ENCODE measurements at regions of chr19 and their contacts with region 1.

Region 1: DNA sequence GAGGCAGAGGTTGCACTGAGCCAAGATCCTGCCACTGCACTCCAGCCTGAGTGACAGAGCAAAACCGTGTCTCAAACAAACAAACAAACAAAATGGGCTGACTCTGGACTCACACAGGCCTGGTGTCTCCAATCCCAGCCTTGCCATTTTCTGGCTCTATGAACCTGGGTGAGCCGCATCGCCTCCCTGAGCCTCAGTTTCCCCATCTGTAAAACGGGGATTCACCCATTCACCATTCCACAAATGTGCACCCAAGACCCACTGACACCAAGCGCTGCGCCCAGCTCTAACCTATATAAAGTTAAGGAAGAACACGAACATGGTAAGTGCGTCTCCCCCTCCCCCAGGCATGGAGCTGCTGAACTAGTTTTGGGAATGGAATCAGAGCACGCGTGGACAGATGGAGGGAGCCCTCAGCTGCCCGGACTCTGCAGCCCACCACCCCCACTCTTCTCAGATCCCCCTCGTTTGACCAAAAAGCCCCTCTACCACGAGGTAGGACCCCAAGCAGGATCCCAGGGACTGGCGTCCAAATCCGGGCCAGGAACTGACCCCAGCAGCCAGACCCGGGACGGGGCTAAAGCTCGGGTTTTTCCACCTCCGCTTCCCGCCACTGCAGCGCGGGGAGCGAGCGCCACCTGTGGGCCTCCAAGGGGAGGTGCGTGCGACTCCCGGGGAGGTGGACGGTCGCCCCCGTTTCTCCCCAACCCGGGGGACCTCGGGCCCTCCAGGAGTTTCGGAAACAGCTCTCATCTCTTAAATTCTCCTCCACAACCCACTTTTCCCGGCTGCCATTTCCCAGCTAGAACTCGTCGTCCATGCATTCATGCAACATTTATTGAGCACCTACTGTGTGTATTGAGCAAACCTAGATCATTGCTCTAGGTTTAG is 33.0 kb upstream of the ADGRE5 start:
- DNase-seq: no peak
- H3K4me3 ChIP-seq: peak overlapping the region; percentile 32
- H3K27me3 ChIP-seq: peaks cover 8% of the 10 kb centered on the region
- CTCF ChIP-seq: peak; percentile 100

Region 2: GRCh38 chr19:14136509-14137281 is 211.5 kb before region 1 on chr19 and contains the start of gene ASF1B:
- CTCF ChIA-PET with region 1: interaction called, 52 read pairs
- POLR2A ChIA-PET with region 1: no interaction called
- DNase-seq: peak; percentile 99
- H3K4me3 ChIP-seq: peak within 1 kb of the TSS; percentile 93
- H3K27me3 ChIP-seq: no peaks in the 10 kb centered on the region
- CTCF ChIP-seq: peak; percentile 66
- polyA plus RNA-seq, gene ASF1B: 8.2 and 11.1 TPM in 2 replicates

Region 3: GRCh38 chr19:14183741-14184350 is 164.4 kb before region 1 on chr19:
- CTCF ChIA-PET with region 1: interaction called, 11 read pairs
- POLR2A ChIA-PET with region 1: no interaction called
- DNase-seq: no peak
- H3K4me3 ChIP-seq: no peak overlapping the region
- H3K27me3 ChIP-seq: no peaks in the 10 kb centered on the region
- CTCF ChIP-seq: no peak

Region 4: DNA sequence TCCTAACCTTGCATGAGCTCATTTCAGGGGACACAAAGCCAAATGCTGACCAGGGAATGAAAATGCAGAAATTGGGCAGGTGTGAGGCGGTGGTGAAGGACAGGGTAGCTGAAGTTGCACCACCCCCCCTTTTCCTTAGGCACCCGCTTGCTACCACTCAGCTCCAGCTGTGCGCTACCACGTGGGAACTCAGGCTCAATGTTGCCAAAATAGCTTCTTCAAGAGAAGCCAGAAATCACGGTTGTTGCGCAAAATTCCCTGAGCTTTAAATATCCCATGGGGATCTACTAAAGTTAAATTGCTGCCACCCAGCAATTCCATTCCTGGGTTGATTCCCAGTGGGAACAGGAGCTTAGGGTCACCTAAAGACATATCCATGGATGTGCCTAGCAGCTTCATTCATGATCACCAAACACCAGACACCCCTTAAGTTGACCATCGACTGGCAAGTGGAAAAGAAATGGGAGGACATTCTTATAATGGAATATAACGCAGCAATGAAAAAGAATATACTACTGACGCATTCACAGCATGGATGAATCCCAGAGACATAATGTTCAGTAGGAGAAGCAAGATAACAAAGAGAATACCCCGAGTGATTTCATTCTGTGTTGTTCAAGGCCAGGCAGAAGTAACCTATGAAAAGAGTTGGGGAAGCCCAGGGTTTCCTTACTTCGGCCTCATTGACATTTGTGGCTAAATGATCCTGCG is 129.5 kb before region 1 on chr19:
- CTCF ChIA-PET with region 1: interaction called, 10 read pairs
- POLR2A ChIA-PET with region 1: no interaction called
- DNase-seq: no peak
- H3K4me3 ChIP-seq: no peak overlapping the region
- H3K27me3 ChIP-seq: no peaks in the 10 kb centered on the region
- CTCF ChIP-seq: no peak

Region 5: GRCh38 chr19:14329798-14330197 is 18.4 kb before region 1 on chr19:
- CTCF ChIA-PET with region 1: interaction called, 22 read pairs
- POLR2A ChIA-PET with region 1: no interaction called
- DNase-seq: no peak
- H3K4me3 ChIP-seq: no peak overlapping the region
- H3K27me3 ChIP-seq: no peaks in the 10 kb centered on the region
- CTCF ChIP-seq: no peak

Region 6: GRCh38 chr19:14366498-14366915 is 18.3 kb after region 1 on chr19:
- CTCF ChIA-PET with region 1: interaction called, 13 read pairs
- POLR2A ChIA-PET with region 1: no interaction called
- DNase-seq: no peak
- H3K4me3 ChIP-seq: no peak overlapping the region
- H3K27me3 ChIP-seq: no peaks in the 10 kb centered on the region
- CTCF ChIP-seq: no peak

Measured in BJ (cell line).